GM18951 (cell line): ENCODE measurements at regions of chr3 and their contacts with region 1.

Region 1: DNA sequence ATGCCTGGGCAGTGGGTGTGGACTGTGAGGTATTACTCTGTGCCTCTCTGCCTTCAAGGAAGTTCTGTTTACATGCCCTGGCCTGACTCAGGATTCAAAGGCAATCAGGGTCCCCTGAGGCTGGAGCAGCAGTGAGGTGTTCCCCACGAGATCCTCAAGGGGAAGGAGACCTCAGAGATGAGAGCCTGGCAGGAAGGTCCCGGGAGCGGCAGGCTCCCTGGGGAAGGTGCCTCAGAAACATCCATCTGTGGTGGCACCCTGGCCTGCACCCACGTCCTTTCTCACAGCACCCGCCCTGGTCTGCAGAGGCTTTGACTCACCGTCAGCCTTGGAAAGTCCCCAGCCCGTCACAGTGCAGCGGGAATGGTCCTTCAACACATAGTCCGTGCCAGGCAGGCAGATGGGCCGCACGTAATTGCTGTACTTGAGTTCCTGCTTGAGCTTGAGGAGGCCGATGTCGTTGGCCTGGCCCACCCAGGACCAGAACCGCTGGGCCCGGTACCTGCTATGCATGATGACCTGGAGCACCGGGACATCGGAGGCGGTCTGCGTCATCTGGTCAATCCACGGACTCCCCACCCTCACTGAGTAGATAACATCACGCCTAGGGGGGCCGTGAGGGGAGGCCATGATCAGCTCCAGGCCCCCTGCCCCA is 3.6 kb downstream of the PRSS50 start:
- POLR2A ChIP-seq: no peak

Region 2: DNA sequence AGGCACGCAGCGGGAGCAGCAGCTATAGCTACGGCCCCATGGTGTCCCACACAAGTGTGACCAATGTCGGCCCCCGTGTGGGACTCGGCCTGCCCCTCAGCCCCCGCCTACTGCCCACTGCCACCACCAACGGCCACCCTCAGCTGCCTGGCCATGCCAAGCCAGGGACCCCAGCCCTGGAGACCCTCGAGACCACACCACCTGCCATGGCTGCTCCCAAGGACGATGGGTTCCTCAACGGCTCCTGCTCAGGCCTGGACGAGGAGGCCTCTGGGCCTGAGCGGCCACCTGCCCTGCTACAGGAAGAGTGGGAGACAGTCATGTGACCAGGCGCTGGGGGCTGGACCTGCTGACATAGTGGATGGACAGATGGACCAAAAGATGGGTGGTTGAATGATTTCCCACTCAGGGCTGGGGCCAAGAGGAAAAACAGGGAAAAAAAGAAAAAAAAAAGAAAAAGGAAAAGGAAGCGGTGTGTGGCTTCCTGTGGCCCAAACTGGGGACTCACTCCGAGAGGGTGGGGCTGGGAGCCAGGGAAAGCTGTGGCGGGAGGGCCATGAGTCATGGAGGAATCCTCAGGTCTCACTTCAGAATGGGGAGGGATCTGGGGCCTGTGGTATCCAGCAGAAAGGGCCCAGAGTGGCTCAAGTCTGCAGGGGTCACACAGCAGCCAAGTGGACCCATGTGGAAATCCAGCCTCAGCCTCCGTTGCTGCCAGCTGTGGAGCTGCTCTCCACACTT is 189.5 kb after region 1 on chr3:
- in situ Hi-C with region 1: loop called (anchors 5 kb)
- POLR2A ChIP-seq: no peak